WTC11 (cell line): ENCODE measurements at regions of chr5 and their contacts with region 1.

Region 1: GRCh38 chr5:141369994-141370848 is at the start of gene PCDHGB3:
- DNase-seq: peak; percentile 56
- ATAC-seq: peak; percentile 95
- H3K4me3 Mint-ChIP-seq: peak within 1 kb of the TSS; percentile 61
- H3K27ac Mint-ChIP-seq: peak within 1 kb of the TSS; percentile 91
- H3K4me1 Mint-ChIP-seq: peaks cover 5% of the 10 kb centered on the region
- H3K27me3 Mint-ChIP-seq: peaks cover 8% of the 10 kb centered on the region
- CTCF ChIP-seq: no peak
- total RNA-seq, gene PCDHGB3: 3.3 to 4.2 TPM (median 3.5 TPM) in 3 replicates

Region 2: DNA sequence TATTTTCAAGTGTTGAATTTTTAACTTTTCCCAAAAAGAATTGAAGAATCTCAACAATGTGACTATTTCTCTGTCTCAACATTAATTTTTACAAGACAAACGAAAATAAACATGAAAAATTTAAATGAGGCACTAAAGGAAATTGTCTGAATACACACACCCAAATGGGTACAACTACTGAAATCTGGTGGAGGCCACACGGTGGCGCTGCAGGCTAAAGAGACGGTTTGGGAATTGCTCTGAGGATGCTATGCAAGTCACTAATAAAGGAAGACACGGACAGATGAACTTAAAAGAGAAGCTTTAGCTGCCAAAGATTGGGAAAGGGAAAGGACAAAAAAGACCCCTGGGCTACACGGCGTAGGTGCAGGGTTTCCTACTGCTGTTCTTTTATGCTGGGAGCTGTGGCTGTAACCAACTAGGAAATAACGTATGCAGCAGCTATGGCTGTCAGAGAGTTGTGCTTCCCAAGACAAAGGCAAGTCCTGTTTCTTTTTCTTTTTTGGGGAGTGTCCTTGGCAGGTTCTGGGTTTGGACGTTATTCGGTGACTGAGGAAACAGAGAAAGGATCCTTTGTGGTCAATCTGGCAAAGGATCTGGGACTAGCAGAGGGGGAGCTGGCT is 178.0 kb before region 1 on chr5 and contains the start of gene PCDHB10:
- CTCF ChIA-PET with region 1: interaction called, 10 read pairs
- POLR2A ChIA-PET with region 1: no interaction called
- DNase-seq: peak; percentile 89
- ATAC-seq: peak; percentile 88
- H3K4me3 Mint-ChIP-seq: peak within 1 kb of the TSS; percentile 58
- H3K27ac Mint-ChIP-seq: no peak within 1 kb of the TSS
- H3K4me1 Mint-ChIP-seq: peaks cover 4% of the 10 kb centered on the region
- H3K27me3 Mint-ChIP-seq: peaks cover 4% of the 10 kb centered on the region
- CTCF ChIP-seq: peak; percentile 70; the same call in 1 of the 2 replicates
- total RNA-seq, gene PCDHB10: 1.4 to 1.9 TPM (median 1.7 TPM) in 3 replicates

Region 3: GRCh38 chr5:141320225-141321169 is 49.7 kb before region 1 on chr5 and contains the start of gene TAF7:
- CTCF ChIA-PET with region 1: interaction called, 10 read pairs
- POLR2A ChIA-PET with region 1: no interaction called
- DNase-seq: peak; percentile 95
- ATAC-seq: peak; percentile 94
- H3K4me3 Mint-ChIP-seq: peak within 1 kb of the TSS; percentile 99
- H3K27ac Mint-ChIP-seq: peak within 1 kb of the TSS; percentile 99
- H3K4me1 Mint-ChIP-seq: peaks cover 24% of the 10 kb centered on the region
- H3K27me3 Mint-ChIP-seq: peaks cover 24% of the 10 kb centered on the region
- CTCF ChIP-seq: peak; percentile 85
- total RNA-seq, gene TAF7: 87.8 to 96.2 TPM (median 90.1 TPM) in 3 replicates

Region 4: DNA sequence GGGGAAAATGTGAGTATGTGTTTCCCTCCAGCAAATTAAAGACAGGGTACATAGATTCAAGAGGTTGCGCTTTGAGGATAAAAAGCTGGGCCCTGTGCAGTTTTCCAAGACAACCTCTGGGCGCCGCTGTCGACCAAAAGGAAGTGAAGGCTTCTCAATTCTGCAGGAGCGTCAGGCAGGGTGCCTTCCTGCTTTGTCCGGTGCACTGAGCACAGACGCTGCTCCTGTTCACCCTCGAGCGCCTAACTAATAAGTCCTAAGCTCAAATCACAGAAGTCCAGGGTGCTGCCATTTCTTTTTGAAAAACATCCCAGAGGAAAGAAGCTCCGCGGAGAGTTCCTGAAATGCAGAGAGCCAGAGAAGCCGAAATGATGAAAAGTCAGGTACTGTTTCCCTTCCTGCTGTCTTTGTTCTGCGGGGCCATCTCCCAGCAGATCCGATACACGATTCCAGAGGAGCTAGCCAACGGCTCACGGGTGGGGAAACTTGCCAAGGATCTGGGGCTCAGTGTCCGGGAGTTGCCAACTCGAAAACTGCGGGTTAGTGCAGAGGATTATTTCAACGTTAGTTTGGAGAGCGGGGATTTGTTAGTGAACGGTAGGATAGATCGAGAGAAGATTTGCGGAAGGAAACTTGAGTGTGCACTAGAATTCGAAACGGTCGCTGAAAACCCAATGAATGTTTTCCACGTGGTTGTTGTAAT is 20.2 kb before region 1 on chr5 and contains the start of gene PCDHGB1:
- CTCF ChIA-PET with region 1: interaction called, 17 read pairs
- POLR2A ChIA-PET with region 1: no interaction called
- DNase-seq: peak; percentile 86
- ATAC-seq: peak; percentile 96
- H3K4me3 Mint-ChIP-seq: peak within 1 kb of the TSS; percentile 72
- H3K27ac Mint-ChIP-seq: peak within 1 kb of the TSS; percentile 47; the same call in 1 of the 2 replicates
- H3K4me1 Mint-ChIP-seq: peaks cover 2% of the 10 kb centered on the region
- H3K27me3 Mint-ChIP-seq: peaks cover 3% of the 10 kb centered on the region
- CTCF ChIP-seq: peak; percentile 50
- total RNA-seq, gene PCDHGB1: 4.9 to 5.6 TPM (median 5.5 TPM) in 3 replicates

Region 5: DNA sequence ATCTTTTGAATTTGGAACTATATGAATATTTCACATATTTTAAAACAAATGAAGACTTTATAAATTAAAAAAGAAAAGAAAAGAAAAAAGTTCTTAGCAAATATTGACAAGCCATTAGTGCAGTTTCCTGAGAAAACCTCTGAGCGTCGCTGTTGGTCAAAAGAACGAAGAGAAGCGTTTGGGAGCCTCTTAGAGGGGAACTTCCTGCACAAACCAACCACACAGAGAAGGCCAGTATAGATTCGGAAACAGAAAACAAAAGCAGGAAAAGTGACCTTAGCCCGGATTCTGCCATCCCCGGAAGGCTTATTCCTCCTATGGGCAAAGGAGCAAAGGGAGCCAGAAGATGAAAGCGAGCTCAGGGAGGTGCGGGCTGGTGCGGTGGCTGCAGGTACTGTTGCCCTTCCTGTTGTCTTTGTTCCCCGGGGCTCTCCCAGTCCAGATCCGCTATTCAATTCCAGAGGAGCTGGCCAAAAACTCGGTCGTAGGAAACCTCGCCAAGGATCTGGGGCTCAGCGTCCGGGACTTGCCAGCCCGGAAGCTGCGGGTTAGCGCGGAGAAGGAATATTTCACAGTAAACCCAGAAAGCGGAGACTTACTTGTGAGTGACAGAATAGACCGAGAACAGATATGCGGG is 10.3 kb before region 1 on chr5 and contains the start of gene PCDHGB2:
- CTCF ChIA-PET with region 1: interaction called, 15 read pairs
- POLR2A ChIA-PET with region 1: no interaction called
- DNase-seq: peak; percentile 46
- ATAC-seq: peak; percentile 83
- H3K4me3 Mint-ChIP-seq: peak within 1 kb of the TSS; percentile 60
- H3K27ac Mint-ChIP-seq: peak within 1 kb of the TSS; percentile 96
- H3K4me1 Mint-ChIP-seq: peaks cover 27% of the 10 kb centered on the region
- H3K27me3 Mint-ChIP-seq: peaks cover 22% of the 10 kb centered on the region; the same call in 1 of the 2 replicates
- CTCF ChIP-seq: peak; percentile 65
- total RNA-seq, gene PCDHGB2: 4.1 to 5.5 TPM (median 5.2 TPM) in 3 replicates

Region 6: DNA sequence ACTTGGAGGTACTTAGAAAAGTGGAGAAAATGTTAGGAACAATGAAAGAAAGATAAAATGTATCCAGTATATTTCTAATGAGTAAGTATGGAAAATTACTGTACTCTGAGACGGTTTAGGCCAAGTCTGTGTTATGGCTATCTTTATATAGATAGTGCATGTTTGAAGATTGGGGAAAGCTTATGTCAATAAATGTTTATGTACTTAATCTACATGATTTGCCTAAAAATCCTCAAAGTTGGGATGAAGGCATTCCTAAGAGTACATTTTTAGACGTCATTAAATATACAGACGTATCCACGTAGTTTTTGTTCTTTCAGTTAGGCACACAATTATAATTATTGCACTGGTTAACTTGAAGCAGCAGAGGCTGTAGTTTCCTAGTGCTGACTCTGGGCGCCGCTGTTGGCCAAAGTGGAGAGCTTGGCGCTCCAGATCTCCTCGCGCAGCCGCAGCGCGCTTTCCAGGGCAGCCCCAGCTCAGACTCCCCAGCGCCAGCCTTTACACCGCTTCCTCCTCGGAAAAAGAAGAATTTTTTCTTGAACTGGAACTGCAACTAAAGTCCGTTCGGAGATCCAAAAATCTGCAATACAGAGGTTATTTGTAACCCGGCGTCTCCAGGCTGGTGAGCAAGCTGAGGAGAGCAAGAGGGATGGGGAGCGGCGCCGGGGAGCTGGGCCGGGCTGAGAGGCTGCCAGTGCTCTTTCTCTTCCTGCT is 17.2 kb after region 1 on chr5 and contains the start of gene PCDHGB4:
- CTCF ChIA-PET with region 1: interaction called, 19 read pairs
- POLR2A ChIA-PET with region 1: no interaction called
- DNase-seq: peak; percentile 80
- ATAC-seq: peak; percentile 96
- H3K4me3 Mint-ChIP-seq: peak within 1 kb of the TSS; percentile 81
- H3K27ac Mint-ChIP-seq: no peak within 1 kb of the TSS
- H3K4me1 Mint-ChIP-seq: 0 out of 2 replicates have a peak, but pooled peaks cover 3% of the 10 kb centered on the region
- H3K27me3 Mint-ChIP-seq: peaks cover 37% of the 10 kb centered on the region
- CTCF ChIP-seq: peak; percentile 48; the same call in 1 of the 2 replicates
- total RNA-seq, gene PCDHGB4: 7.8 to 9.1 TPM (median 8.8 TPM) in 3 replicates